ENCODE measurements at regions of chr6 and their contacts with region 1.

Region 1: DNA sequence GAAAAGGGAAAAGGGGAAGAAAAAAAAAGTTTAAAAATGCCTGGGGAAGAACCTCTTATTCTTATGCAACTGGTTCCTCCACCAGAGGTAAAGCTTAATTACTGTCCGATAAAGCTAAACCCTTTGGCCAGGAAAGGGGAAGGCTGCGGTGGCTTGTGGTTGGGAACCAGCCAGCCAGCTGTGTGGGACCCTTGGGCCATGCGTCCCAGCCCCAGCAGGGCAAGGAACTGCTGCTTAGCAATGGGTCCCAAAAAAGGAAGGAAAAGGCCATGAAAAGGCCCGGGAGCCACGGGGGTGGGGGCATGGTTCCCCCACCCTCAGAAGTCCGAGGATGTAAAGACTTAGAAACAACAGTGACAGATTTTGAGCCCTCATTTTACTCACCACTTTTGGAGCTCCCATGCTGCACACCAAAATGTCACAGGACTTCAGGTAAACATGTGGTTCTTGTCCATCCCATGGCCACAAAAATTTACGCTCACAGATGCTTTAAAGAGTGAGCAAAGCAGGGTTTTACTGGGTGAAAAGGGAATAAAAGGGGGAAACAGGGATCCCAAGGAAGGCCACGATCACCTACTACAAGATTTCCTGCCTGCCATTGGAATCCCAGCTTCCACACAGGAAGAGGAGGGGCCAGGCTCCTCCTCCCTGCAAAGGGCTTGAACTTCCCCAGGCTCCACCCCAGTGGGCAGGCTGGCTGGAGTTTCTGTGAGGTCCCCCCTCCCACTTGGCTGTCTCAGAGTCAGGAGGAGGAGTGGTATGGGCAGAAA is 1234.7 kb upstream of the GJE1 start:
- DNase-seq: no peak
- ATAC-seq: peak; percentile 88
- H3K4me3 ChIP-seq: peak overlapping the region; percentile 78
- H3K27ac ChIP-seq: peak overlapping the region; percentile 65
- H3K4me1 ChIP-seq: no peaks in the 10 kb centered on the region
- H3K27me3 ChIP-seq: no peaks in the 10 kb centered on the region
- CTCF ChIP-seq: no peak
- EP300 ChIP-seq: no peak
- POLR2A ChIP-seq: no peak
- RAD21 ChIP-seq: no peak

Region 2: GRCh38 chr6:140537819-140538705 is 359.9 kb before region 1 on chr6:
- CTCF ChIA-PET with region 1: no interaction called
- POLR2A ChIA-PET with region 1: no interaction called
- RAD21 ChIA-PET with region 1: no interaction called
- SMC1A ChIA-PET with region 1: interaction called, 3 read pairs
- in situ Hi-C with region 1: no loop called
- intact Hi-C with region 1: loop called (anchors 10 kb)
- DNase-seq: no peak
- ATAC-seq: peak; percentile 63
- H3K4me3 ChIP-seq: no peak overlapping the region
- H3K27ac ChIP-seq: no peak overlapping the region
- H3K4me1 ChIP-seq: no peaks in the 10 kb centered on the region
- H3K27me3 ChIP-seq: no peaks in the 10 kb centered on the region
- CTCF ChIP-seq: no peak
- EP300 ChIP-seq: no peak; a peak in 1 of 4 replicates
- POLR2A ChIP-seq: no peak
- RAD21 ChIP-seq: no peak

Region 3: GRCh38 chr6:141169419-141169818 is 271.4 kb after region 1 on chr6:
- CTCF ChIA-PET with region 1: no interaction called
- POLR2A ChIA-PET with region 1: no interaction called
- RAD21 ChIA-PET with region 1: no interaction called
- SMC1A ChIA-PET with region 1: no interaction called
- in situ Hi-C with region 1: no loop called
- intact Hi-C with region 1: no loop called
- DNase-seq: no peak
- ATAC-seq: no peak
- H3K4me3 ChIP-seq: no peak overlapping the region
- H3K27ac ChIP-seq: no peak overlapping the region
- H3K4me1 ChIP-seq: no peaks in the 10 kb centered on the region
- H3K27me3 ChIP-seq: no peaks in the 10 kb centered on the region
- CTCF ChIP-seq: no peak
- EP300 ChIP-seq: no peak
- POLR2A ChIP-seq: no peak
- RAD21 ChIP-seq: no peak

Measured in GM12878 (cell line).